Mammary epithelial cell (primary cell): ENCODE measurements at regions of chr4 and their contacts with region 1.

Region 1: DNA sequence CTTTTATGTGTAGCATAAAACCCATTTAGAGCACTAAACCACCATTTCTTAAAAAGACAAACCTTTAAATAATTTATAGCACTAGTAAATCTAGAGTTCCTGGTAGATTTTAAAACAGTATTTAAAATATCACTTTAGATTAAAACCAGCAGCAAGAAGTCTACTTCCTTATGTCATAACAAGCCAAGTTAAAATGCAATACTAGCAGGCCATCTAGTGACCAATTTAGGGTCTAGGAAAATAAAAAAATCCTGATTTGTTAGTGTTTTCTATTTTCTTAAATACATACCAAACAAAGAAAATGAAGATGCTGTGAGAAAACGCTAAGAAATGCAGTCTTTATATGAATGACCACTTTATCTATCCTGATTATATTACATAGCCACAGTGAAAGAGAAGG is 53.9 kb downstream of the PAPSS1 start:
- DNase-seq: no peak
- H3K4me3 ChIP-seq: no peak overlapping the region
- H3K27ac ChIP-seq: no peak overlapping the region
- H3K4me1 ChIP-seq: no peaks in the 10 kb centered on the region
- H3K27me3 ChIP-seq: no peaks in the 10 kb centered on the region
- CTCF ChIP-seq: peak in 1 of 2 donors; percentile 8

Region 2: GRCh38 chr4:107037199-107037584 is 628.9 kb before region 1 on chr4:
- CTCF ChIA-PET with region 1: no interaction called
- dilution Hi-C with region 1: no loop called
- in situ Hi-C with region 1: no loop called
- intact Hi-C with region 1: loop called (anchors 5 kb)
- DNase-seq: no peak
- H3K4me3 ChIP-seq: no peak overlapping the region
- H3K27ac ChIP-seq: no peak overlapping the region
- H3K4me1 ChIP-seq: peaks cover 14% of the 10 kb centered on the region
- H3K27me3 ChIP-seq: peaks cover 39% of the 10 kb centered on the region
- CTCF ChIP-seq: peak; percentile 15 to 58

Region 3: DNA sequence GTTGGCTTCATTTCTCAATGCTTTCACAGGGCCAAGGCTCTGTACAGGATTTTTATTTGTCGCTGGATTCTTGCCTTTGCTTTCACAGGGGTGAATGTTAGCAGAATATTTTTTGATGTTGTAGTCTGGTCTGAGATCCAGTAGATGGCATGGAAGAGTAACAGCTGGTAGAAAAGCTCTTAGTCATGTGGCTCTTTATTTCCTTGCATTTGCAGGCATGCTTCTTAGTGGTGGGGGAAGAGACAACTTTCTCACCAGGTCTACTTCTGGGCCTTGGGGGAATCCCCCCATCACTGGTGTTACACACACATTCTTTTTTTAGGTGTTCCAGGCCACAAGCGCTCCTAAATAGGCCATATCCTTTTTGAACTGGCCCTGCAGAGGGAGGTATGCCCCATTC is 571.8 kb before region 1 on chr4:
- CTCF ChIA-PET with region 1: no interaction called
- dilution Hi-C with region 1: no loop called
- in situ Hi-C with region 1: no loop called
- intact Hi-C with region 1: loop called (anchors 10 kb)
- DNase-seq: peak; percentile 11
- H3K4me3 ChIP-seq: no peak overlapping the region
- H3K27ac ChIP-seq: no peak overlapping the region
- H3K4me1 ChIP-seq: no peaks in the 10 kb centered on the region
- H3K27me3 ChIP-seq: no peaks in the 10 kb centered on the region
- CTCF ChIP-seq: peak; percentile 39 to 67

Region 4: GRCh38 chr4:107392951-107393350 is 273.2 kb before region 1 on chr4:
- CTCF ChIA-PET with region 1: no interaction called
- dilution Hi-C with region 1: no loop called
- in situ Hi-C with region 1: no loop called
- intact Hi-C with region 1: no loop called
- DNase-seq: no peak
- H3K4me3 ChIP-seq: no peak overlapping the region
- H3K27ac ChIP-seq: no peak overlapping the region
- H3K4me1 ChIP-seq: no peaks in the 10 kb centered on the region
- H3K27me3 ChIP-seq: no peaks in the 10 kb centered on the region
- CTCF ChIP-seq: no peak